ENCODE measurements at regions of chr6 and their contacts with region 1.

Region 1: DNA sequence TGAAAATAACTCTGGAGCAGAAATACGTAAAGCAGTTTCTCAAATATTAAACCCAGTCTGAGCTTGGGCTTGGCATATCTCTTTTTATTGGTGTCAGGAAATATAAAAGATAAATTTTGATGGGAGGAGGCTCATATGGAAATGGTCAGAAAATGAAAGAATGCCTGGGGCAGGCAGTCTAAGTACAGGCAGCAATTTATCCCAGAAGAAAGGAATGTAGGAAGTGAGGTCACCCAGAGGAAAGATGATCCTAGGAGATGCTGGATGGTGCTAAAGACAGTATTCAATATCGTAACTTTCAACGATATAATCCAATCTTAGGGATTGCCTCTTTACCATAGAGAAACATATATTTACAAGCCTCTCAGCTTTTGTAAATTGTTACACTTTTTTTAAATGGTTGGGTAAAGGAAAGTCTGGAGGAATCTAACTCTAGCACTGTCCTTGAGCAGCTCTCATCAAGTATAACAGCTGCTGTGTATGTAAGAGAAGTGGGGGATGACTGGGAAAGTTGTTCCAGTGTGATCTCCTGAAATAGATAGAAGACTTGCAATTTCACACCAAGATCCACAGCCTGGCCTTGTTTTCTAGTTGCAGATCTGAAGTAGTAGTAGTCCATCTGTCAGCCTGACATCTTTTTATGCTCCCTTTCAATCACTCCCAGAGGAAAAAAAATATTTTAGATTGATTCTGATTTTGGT is 256.9 kb upstream of the SASH1 start:
- DNase-seq: no peak
- H3K4me3 ChIP-seq: no peak overlapping the region
- H3K27ac ChIP-seq: no peak overlapping the region
- H3K4me1 ChIP-seq: no peaks in the 10 kb centered on the region
- H3K27me3 ChIP-seq: no peaks in the 10 kb centered on the region
- CTCF ChIP-seq: no peak

Region 2: DNA sequence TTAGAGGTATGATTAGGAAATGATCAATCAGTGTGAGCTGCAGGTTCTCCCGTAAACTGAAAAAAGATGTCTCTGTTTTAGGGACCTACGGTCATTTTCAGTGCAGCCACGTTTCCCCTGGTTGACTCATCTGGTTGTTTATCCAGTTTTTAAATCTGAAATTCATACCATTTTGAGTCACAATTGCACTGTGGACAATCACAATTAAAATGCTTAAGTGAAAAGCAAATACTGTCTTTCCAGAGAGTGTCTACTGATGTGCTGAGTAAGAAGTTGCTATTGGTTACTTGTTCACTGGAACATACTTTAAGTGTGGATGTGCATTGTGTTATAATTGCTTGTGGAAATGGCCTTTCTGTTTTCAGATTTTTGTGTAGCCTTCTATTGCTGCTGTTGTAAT is 48.3 kb before region 1 on chr6:
- intact Hi-C with region 1: loop called (anchors 1 kb)
- DNase-seq: no peak
- H3K4me3 ChIP-seq: no peak overlapping the region
- H3K27ac ChIP-seq: no peak overlapping the region
- H3K4me1 ChIP-seq: no peaks in the 10 kb centered on the region
- H3K27me3 ChIP-seq: no peaks in the 10 kb centered on the region
- CTCF ChIP-seq: no peak

Measured in tibial artery (tissue), 4 donors.